ENCODE measurements at regions of chr5 and their contacts with region 1.

Region 1: GRCh38 chr5:91311697-91312501 is 71.2 kb downstream of the ARRDC3 start:
- DNase-seq: peak; percentile 30 to 91 (median 73)
- ATAC-seq: peak; percentile 72
- H3K4me3 ChIP-seq: no peak overlapping the region
- H3K4me3 Mint-ChIP-seq: peak overlapping the region; percentile 49
- H3K27ac ChIP-seq: peak overlapping the region; percentile 40 to 75
- H3K27ac Mint-ChIP-seq: peak overlapping the region; percentile 93
- H3K4me1 ChIP-seq: peaks cover 39% of the 10 kb centered on the region
- H3K4me1 Mint-ChIP-seq: peaks cover 49% of the 10 kb centered on the region
- H3K27me3 ChIP-seq: no peaks in the 10 kb centered on the region
- H3K27me3 Mint-ChIP-seq: no peaks in the 10 kb centered on the region
- CTCF ChIP-seq: no peak

Region 2: GRCh38 chr5:91119981-91120850 is 191.7 kb before region 1 on chr5:
- CTCF ChIA-PET with region 1: no interaction called
- POLR2A ChIA-PET with region 1: no interaction called
- intact Hi-C with region 1: no loop called
- DNase-seq: no peak
- ATAC-seq: no peak
- H3K4me3 ChIP-seq: no peak overlapping the region
- H3K4me3 Mint-ChIP-seq: no peak overlapping the region
- H3K27ac ChIP-seq: no peak overlapping the region
- H3K27ac Mint-ChIP-seq: no peak overlapping the region
- H3K4me1 ChIP-seq: no peaks in the 10 kb centered on the region
- H3K4me1 Mint-ChIP-seq: no peaks in the 10 kb centered on the region
- H3K27me3 ChIP-seq: no peaks in the 10 kb centered on the region
- H3K27me3 Mint-ChIP-seq: no peaks in the 10 kb centered on the region
- CTCF ChIP-seq: no peak

Region 3: DNA sequence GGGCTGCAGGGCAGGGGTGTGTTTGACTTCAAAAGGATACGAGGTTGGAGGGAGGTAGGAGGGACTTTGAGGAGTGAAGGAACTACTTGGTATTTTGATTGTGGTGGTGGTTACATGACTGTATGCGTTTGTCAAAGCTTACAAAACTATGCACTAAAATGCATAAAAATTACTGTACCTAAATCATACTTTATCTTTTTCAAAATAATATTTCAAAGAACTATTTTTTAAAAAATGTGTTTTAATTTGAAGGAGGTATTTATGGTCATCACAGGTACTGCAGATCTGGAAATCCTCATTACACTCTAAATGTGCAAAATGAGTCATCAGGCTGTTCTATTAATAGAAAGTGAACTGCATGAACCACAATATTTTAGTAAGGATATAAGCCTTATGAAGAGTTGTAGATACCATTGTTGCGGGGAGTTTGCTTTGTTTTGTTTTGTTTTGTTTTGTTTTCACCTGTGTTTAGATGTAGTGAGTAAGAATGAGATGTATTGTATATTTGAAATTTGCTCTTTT is 45.7 kb before region 1 on chr5:
- CTCF ChIA-PET with region 1: interaction called, 3 read pairs
- POLR2A ChIA-PET with region 1: no interaction called
- intact Hi-C with region 1: loop called in 1 of 2 experiments (anchors 10 kb)
- DNase-seq: peak in 2 of 9 experiments; percentile 11 to 31
- ATAC-seq: peak; percentile 52
- H3K4me3 ChIP-seq: no peak overlapping the region
- H3K4me3 Mint-ChIP-seq: no peak overlapping the region
- H3K27ac ChIP-seq: no peak overlapping the region
- H3K27ac Mint-ChIP-seq: no peak overlapping the region
- H3K4me1 ChIP-seq: peaks cover 8% of the 10 kb centered on the region
- H3K4me1 Mint-ChIP-seq: peaks cover 16% of the 10 kb centered on the region
- H3K27me3 ChIP-seq: no peaks in the 10 kb centered on the region
- H3K27me3 Mint-ChIP-seq: no peaks in the 10 kb centered on the region
- CTCF ChIP-seq: no peak

Region 4: DNA sequence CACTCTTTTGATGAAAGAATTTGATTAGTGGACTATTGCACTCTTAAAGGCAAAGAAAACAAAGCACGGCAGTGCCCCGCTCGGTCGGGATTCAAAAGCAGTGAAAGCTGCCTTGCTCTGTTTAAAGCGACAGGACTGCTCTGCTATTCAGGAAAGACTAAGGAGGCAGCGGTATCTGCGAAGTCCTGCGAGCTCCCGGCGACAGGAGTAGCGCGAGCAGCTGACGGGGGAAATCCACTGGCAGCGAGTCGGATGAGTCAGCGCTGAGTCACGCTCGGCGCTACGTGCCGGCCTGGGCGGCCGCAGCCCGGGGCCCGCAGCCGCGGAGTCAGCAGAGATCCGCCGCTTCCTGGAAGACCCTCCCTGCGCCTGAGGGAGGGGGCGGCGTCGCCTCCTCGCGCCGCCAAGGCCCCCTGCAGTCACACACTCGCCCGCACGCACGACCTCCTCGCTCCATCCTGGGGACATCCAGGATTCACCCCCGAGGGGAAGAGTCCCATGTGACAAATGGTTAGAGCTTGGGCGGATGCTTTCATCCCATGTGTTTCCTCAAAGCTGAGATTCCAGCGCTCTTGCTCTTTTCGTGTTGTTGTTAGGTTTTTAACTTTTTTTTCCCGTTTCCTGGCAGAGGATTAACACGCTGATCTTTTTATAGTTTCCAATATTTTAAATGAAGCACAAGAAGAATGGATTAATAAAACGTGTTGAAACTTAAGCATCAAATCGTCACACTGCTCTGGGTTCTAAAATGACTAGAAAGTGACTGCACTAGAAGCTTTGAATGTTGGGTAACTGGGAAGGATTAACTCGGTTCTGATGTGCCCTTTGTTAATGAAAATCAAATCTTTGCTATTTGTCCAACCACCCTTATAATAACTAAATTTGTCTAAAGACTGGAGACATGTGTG is 31.3 kb before region 1 on chr5:
- CTCF ChIA-PET with region 1: interaction called, 3 read pairs
- POLR2A ChIA-PET with region 1: interaction called, 9 read pairs
- intact Hi-C with region 1: loop called (anchors 1 kb)
- DNase-seq: peak; percentile 53 to 95 (median 85)
- ATAC-seq: peak; percentile 84
- H3K4me3 ChIP-seq: peak overlapping the region; percentile 58 to 79
- H3K4me3 Mint-ChIP-seq: peak overlapping the region; percentile 84
- H3K27ac ChIP-seq: peak overlapping the region; percentile 16 to 28
- H3K27ac Mint-ChIP-seq: peak overlapping the region; percentile 84
- H3K4me1 ChIP-seq: peaks cover 8% of the 10 kb centered on the region
- H3K4me1 Mint-ChIP-seq: peaks cover 26% of the 10 kb centered on the region
- H3K27me3 ChIP-seq: no peaks in the 10 kb centered on the region
- H3K27me3 Mint-ChIP-seq: no peaks in the 10 kb centered on the region
- CTCF ChIP-seq: no peak

Region 5: GRCh38 chr5:91366571-91366970 is 54.7 kb after region 1 on chr5:
- CTCF ChIA-PET with region 1: interaction called, 3 read pairs
- POLR2A ChIA-PET with region 1: interaction called, 10 read pairs
- intact Hi-C with region 1: loop called in 1 of 2 experiments (anchors 5 kb)
- DNase-seq: no peak
- ATAC-seq: no peak
- H3K4me3 ChIP-seq: no peak overlapping the region
- H3K4me3 Mint-ChIP-seq: no peak overlapping the region
- H3K27ac ChIP-seq: no peak overlapping the region
- H3K27ac Mint-ChIP-seq: no peak overlapping the region
- H3K4me1 ChIP-seq: peaks cover 8% of the 10 kb centered on the region
- H3K4me1 Mint-ChIP-seq: peaks cover 27% of the 10 kb centered on the region
- H3K27me3 ChIP-seq: no peaks in the 10 kb centered on the region
- H3K27me3 Mint-ChIP-seq: no peaks in the 10 kb centered on the region
- CTCF ChIP-seq: no peak